CD14-positive monocyte (primary cell): ENCODE measurements at regions of chr7 and their contacts with region 1.

Region 1: DNA sequence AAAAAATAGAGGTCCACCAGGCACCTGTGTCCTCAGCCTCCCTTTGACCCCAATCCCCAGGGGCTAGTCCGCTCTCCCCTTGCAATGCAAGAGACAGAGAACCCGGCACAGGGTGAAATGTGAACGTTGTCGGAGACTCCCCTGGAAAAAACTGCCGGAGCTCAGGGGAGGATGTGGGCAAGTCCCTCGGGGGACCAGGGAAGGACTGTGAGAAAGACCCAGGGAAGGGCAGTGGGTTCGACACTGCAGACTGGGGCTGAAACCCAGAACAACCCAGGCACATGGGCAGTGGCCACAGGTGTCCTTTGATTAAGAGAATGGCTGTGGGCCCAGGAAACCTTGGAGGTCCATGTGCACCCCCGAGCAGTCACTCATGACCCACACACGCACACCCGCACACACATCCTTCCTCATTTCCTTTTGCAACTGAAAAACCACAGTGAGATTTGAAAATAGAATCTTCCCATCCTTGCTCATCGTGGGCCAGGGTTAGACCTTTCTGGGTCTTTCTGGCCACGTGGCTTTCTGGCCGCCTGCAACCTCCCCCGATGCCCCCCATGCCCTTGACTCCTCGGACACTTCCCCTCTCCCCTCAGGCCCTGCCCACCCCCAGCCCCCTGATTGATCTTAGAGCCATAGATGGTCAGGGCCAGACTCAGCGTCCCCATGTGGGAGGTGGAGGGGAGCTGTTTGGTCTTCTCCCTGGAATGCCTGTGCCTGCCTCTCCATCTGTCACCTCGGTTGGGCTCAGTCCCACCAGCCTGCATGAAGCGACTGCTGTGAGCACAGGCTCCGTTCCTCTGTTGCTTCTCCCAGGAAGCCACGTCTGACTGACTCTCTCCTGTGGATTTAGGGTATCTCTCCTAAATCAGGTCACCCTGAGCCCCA is 7.9 kb downstream of the LAT2 start:
- DNase-seq: peak; percentile 71 to 87 (median 78)
- H3K4me3 ChIP-seq: peak overlapping the region in 1 of 3 experiments; percentile 58
- H3K4me3 Mint-ChIP-seq: peak overlapping the region; percentile 48 to 76
- H3K27ac ChIP-seq: peak overlapping the region; percentile 85 to 94
- H3K27ac Mint-ChIP-seq: peak overlapping the region; percentile 87 to 96 (median 94)
- H3K4me1 ChIP-seq: peaks cover 68 to 85% of the 10 kb centered on the region in 2 donors
- H3K4me1 Mint-ChIP-seq: peaks cover 66% of the 10 kb centered on the region
- H3K27me3 ChIP-seq: no peaks in the 10 kb centered on the region
- H3K27me3 Mint-ChIP-seq: no peaks in the 10 kb centered on the region
- CTCF ChIP-seq: no peak

Region 2: GRCh38 chr7:74231232-74231590 is 13.5 kb after region 1 on chr7:
- intact Hi-C with region 1: loop called in 1 of 2 experiments (anchors 2 kb)
- DNase-seq: peak in 1 of 3 donors; percentile 27
- H3K4me3 ChIP-seq: no peak overlapping the region
- H3K4me3 Mint-ChIP-seq: peak overlapping the region in 1 of 2 donors; percentile 48
- H3K27ac ChIP-seq: peak overlapping the region; percentile 73 to 82
- H3K27ac Mint-ChIP-seq: peak overlapping the region; percentile 86 to 95 (median 93)
- H3K4me1 ChIP-seq: peaks cover 49 to 55% of the 10 kb centered on the region in 2 donors
- H3K4me1 Mint-ChIP-seq: peaks cover 49% of the 10 kb centered on the region
- H3K27me3 ChIP-seq: no peaks in the 10 kb centered on the region
- H3K27me3 Mint-ChIP-seq: peaks cover 0 to 2% (median 0%) of the 10 kb centered on the region in 3 donors
- CTCF ChIP-seq: no peak